Left ventricle myocardium superior (tissue), 1 donor: ENCODE measurements at regions of chr11 and their contacts with region 1.

Region 1: DNA sequence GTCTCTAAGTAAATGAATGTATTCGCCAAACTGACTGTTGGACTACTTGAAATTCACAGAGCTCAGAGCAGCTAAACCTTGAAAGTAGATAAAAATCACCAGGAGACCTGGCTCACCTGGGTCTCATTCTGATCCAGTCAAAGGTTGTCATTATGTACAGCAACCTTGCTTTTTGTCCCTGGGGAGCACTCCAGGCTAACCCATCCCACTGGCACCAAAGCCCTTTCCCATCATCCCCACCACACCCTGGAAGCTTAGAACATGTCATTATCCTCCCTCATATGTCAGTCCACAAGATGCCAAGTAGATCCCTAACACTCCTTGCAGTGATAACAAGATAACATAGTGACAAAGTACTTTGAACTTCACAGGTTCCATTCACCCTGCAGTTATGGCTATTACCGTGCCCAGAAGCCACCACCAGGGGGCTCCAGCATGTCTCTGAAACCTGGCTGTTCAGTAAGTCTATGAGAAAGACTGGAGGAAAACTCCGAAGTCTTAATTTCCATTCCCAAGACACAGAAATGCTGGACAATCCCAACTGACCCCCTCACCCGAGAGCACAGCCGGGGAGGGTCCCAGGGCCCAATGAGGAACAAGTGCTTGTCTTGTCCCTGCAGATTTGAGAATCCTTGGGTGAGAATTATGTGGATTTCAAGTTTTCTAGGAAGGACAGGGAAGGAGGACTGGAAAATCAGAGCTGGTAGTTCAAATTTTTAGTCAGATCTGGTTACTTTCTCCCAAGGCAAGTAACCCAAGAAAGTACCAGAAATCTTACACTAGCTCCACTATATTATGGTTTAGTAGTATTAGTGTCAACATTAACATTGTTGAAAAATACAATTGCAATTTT is 43.0 kb upstream of the USP47 start:
- DNase-seq: peak; percentile 92
- ATAC-seq: peak; percentile 94

Region 2: DNA sequence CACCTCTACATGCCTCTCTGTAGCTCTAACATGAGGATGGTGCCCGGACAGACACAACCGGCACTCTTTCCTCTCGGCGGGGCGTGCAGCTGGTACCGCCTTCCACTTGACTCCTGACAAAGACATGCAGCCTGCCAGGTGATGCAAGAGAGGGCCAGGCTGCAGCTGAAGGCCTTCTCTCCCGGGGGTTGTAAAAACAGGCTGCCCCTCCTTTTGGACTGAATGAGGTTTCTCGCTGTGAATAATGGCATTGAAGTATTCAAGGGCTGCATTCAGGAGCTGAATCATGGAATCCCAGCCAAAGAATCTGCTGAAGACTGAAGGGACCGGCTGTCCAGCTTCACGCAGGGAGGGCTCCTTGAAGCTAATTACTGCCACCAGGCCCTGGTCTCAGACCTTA is 287.9 kb before region 1 on chr11:
- intact Hi-C with region 1: no loop called
- DNase-seq: peak; percentile 51
- ATAC-seq: peak; percentile 62

Region 3: GRCh38 chr11:11848891-11849746 is 50.3 kb after region 1 on chr11:
- intact Hi-C with region 1: no loop called
- DNase-seq: peak; percentile 49
- ATAC-seq: peak; percentile 85

Region 4: DNA sequence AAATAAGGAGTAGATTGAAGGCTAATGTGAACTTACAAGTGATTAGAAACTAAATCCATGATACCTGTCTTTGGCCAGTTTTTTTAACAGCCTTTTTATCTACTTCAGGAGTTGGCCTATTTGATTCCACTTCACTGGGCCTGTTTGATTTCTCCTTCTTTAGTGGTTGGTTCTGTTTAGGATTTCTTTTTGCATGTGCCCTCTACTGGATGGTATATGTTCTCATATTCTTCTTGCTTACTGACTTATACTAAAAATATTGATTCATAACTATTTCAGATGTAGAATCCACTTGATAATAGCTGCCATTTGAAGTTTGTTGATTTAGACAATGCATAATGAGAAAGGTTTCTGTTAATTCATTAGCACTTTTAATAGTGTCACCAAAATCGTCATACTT is 96.9 kb after region 1 on chr11:
- intact Hi-C with region 1: loop called (anchors 5 kb)
- DNase-seq: no peak
- ATAC-seq: no peak